ENCODE measurements at regions of chr12 and their contacts with region 1.

Region 1: DNA sequence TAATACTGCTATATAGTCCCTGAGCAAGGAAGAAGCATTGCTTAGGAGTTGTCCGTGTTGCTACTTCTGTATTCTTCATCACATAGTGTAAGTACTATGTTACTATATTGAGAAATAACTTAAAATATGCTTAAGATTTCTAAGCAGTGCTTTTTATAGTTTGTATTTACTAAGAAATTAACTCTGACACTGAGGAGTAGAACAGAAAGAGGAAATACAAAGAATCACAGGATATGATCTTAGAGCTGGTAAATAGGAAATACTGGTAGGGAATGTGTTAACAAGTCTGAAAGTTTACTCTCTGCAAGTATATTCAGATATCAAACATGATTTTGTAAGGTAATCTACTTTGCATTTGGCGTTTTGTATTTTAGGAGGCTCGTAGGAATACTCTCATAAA is 15.5 kb downstream of the XPOT start:
- DNase-seq: no peak
- ATAC-seq: no peak
- H3K4me3 ChIP-seq: no peak overlapping the region
- H3K27ac ChIP-seq: no peak overlapping the region
- H3K4me1 ChIP-seq: no peaks in the 10 kb centered on the region
- H3K27me3 ChIP-seq: no peaks in the 10 kb centered on the region
- CTCF ChIP-seq: no peak
- POLR2A ChIP-seq: no peak
- RAD21 ChIP-seq: no peak

Region 2: GRCh38 chr12:64459394-64459891 is 39.7 kb after region 1 on chr12:
- CTCF ChIA-PET with region 1: no interaction called
- POLR2A ChIA-PET with region 1: no interaction called
- dilution Hi-C with region 1: no loop called
- in situ Hi-C with region 1: no loop called
- intact Hi-C with region 1: loop called (anchors 1 kb)
- DNase-seq: no peak
- ATAC-seq: no peak
- H3K4me3 ChIP-seq: no peak overlapping the region
- H3K27ac ChIP-seq: peak overlapping the region; percentile 41; the same call in 1 of the 2 replicates
- H3K4me1 ChIP-seq: peaks cover 23% of the 10 kb centered on the region
- H3K27me3 ChIP-seq: no peaks in the 10 kb centered on the region
- CTCF ChIP-seq: no peak
- POLR2A ChIP-seq: no peak
- RAD21 ChIP-seq: no peak

Region 3: GRCh38 chr12:64669270-64669842 is 249.7 kb after region 1 on chr12:
- CTCF ChIA-PET with region 1: no interaction called
- POLR2A ChIA-PET with region 1: no interaction called
- dilution Hi-C with region 1: no loop called
- in situ Hi-C with region 1: no loop called
- intact Hi-C with region 1: no loop called
- DNase-seq: peak; percentile 11
- ATAC-seq: no peak
- H3K4me3 ChIP-seq: no peak overlapping the region
- H3K27ac ChIP-seq: no peak overlapping the region
- H3K4me1 ChIP-seq: peaks cover 32% of the 10 kb centered on the region
- H3K27me3 ChIP-seq: no peaks in the 10 kb centered on the region
- CTCF ChIP-seq: no peak
- POLR2A ChIP-seq: no peak
- RAD21 ChIP-seq: no peak

Measured in IMR-90 (cell line).